Psoas muscle (tissue), 8 donors: ENCODE measurements at regions of chr11 and their contacts with region 1.

Region 1: DNA sequence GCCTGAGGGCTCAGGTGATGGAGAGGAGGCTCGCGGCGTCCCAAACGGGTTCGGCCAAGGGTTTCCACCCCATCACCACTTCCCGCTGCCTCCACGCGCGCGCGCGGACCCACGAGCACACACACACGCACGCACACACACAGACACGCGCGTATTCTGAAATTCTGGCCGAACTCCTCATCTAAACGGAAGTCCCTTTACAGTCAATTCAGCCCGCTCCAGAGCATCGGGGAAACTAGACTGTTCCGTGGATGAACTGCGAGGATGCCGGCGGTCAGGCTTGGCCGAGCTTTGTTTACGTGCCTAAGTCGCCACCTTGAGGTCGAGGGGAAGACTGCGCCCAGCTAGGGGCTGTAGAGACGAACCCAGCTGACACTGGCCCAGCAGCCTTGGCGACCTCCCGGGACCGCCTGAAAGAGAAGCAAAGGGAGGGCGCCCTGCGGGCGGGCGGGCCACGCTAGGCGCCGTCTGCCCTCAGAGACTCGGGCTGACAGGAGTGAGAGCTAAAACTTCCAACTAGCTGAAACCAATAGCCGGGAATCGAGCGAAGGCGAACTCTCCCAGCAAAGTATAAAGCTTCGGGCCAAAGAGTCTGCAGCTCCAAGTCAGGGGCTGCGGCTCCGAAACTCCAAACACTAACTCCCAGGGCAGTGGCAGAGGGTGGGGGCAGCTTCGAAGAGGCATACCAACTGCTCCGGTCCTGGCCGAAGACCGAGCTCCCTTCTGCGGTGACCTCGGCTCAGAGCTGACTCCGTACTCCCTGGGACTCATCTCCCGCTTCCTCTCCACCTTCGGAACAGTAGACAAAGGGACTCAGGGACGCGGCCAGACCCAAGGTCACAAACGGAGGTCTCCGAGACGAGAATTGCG is 124.7 kb upstream of the C11orf58 start:
- DNase-seq: peak; percentile 87 to 93
- ATAC-seq: peak; percentile 97 to 99 (median 98)
- H3K4me3 ChIP-seq: peak overlapping the region; percentile 71
- H3K27ac ChIP-seq: peak overlapping the region; percentile 87
- H3K4me1 ChIP-seq: no peaks in the 10 kb centered on the region
- H3K27me3 ChIP-seq: peaks cover 0 to 8% (median 0%) of the 10 kb centered on the region in 3 donors
- CTCF ChIP-seq: peak; percentile 92

Region 2: DNA sequence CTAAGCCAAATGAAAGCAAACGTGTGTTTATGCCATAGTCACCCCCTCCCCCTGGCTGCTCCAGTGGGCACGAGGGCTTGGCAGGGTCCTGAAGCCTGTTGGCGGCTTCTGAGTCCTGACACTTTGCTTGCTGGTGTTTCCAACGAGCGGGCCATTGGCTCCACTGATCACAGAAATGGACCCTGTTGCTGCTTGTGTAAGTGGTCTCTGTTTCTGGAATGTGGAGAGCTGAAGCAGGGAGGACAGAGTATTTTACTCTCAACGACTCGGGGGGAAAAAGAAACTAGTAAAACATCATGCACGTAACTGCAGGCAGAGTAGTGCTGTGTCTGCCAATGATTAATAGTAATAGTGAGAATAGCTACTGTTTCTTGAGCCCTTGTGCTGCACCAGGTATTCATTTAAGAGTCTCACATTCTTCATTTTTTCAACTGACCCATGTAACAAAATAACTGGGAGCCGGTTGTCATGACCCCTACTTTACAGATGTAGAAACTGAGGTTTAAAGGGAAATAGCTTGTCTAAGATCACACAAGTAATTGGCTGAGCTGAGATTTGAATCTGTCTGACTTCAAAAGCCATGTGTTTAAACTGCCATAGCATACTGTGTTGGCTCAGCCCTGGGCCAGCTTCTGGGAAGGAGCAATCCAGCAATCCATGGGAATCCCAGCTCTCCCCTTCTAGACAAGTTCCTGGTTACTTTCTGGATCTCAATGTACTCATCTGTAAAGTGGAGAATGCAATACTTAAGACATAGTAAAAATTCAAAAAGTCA is 972.3 kb before region 1 on chr11:
- intact Hi-C with region 1: loop called in 1 of 2 experiments (anchors 5 kb)
- DNase-seq: no peak
- ATAC-seq: no peak
- H3K4me3 ChIP-seq: peak overlapping the region; percentile 16
- H3K27ac ChIP-seq: no peak overlapping the region
- H3K4me1 ChIP-seq: no peaks in the 10 kb centered on the region
- H3K27me3 ChIP-seq: no peaks in the 10 kb centered on the region
- CTCF ChIP-seq: no peak

Region 3: DNA sequence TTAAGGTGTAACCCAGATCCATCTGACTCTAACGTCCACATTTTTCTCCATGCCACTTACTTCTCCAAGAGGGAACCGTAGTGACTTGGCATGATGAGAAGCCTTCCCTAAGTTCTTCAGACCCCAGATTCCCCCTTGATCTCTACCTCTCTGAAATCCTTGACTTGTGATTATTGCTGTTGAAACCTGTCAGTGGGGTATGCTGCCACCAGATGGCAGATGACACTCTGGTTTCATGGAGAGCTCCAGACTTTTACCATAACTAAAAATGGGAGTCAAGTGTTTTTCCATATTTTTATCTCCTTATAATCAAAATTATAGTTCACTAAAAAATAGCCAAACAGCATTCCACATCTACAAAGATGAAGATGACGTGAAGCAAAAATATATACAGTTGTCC is 761.6 kb before region 1 on chr11:
- intact Hi-C with region 1: loop called in 1 of 2 experiments (anchors 10 kb)
- DNase-seq: no peak
- ATAC-seq: peak in 3 of 4 donors; percentile 63 to 85 (median 66)
- H3K4me3 ChIP-seq: no peak overlapping the region
- H3K27ac ChIP-seq: no peak overlapping the region
- H3K4me1 ChIP-seq: no peaks in the 10 kb centered on the region
- H3K27me3 ChIP-seq: no peaks in the 10 kb centered on the region
- CTCF ChIP-seq: peak; percentile 62

Region 4: DNA sequence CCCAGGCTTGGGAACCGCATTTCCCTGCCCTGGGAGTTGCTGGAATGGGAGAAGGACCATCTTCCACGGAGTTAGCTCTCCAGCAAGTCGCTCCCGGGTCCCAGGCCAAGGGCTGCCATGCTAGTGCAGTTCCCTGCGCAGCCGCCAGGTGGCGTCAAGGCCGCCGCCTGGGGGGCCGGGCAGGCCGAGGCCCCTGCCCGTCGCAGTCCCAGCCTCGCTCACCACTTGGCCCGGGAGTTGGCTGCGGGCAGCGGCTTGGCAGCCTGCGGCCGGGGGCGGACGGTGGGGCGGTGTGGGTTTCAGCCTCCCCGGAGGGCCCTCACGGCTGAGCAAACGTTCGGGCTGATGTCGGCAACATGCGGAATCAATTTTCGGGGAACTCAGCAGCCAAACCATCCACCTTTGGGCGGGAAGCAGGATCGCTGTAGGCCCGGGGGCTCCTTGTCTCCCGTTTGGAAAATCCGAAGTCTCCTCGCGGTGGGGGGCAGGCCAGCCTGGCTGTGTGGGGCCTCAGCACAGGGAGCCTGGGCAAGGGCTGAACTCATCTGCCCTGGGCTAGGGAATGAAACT is 672.5 kb before region 1 on chr11:
- intact Hi-C with region 1: loop called (anchors 5 kb)
- DNase-seq: peak; percentile 56 to 70
- ATAC-seq: peak; percentile 84 to 92 (median 88)
- H3K4me3 ChIP-seq: peak overlapping the region; percentile 46
- H3K27ac ChIP-seq: no peak overlapping the region
- H3K4me1 ChIP-seq: no peaks in the 10 kb centered on the region
- H3K27me3 ChIP-seq: no peaks in the 10 kb centered on the region
- CTCF ChIP-seq: peak; percentile 92